Mammary epithelial cell (primary cell): ENCODE measurements at regions of chr2 and their contacts with region 1.

Region 1: DNA sequence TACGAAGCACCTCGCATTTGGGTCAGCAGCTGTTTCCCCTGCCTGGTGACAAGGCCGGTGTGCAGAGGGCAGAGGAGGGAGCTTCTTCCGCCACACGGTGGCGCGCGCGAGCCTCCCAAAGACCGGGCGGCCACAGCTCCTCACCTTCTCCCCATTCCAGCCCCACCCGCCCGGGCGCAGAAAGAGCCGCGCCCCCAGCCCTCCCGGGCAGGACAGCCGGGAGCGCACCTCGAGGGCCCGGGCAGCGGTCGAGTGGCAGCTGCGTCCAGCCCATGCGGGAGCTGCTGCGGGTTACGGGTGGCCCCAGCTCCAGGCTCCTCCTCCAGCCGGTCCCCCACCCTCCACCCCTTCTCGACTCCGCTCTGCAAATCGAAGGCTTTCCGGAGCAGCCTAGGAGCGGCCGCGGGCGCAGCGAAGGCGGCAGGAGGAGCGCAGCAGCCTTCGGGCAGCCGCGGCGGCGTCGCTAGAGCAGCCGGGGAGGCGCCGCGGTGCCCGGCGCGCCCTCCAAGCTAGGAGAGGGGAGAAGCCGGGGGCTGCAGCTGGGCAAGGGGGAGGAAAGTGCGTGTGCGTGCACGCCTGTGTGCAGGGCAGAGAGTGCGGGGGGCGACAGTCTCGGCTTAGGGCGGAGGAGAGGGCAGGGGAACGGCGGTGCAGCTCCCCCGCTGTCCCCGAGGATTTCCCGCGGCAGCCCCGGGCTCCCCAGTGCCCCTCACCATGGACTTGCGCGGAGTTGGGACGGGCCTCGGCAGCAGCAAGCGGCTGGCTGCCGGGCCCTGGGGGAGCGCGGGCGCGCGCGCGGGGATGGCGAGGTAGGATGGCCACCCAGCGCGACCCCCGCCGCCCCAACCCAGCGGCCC is at the start of gene CCDC85A:
- DNase-seq: peak; percentile 73
- H3K4me3 ChIP-seq: peak within 1 kb of the TSS; percentile 42 to 59 (median 56)
- H3K27ac ChIP-seq: no peak within 1 kb of the TSS
- H3K4me1 ChIP-seq: peaks cover 15% of the 10 kb centered on the region
- H3K27me3 ChIP-seq: no peaks in the 10 kb centered on the region
- CTCF ChIP-seq: peak; percentile 65 to 87
- total RNA-seq, gene CCDC85A: 0.17 TPM in 1 of 2 donors, not detected in the other

Region 2: DNA sequence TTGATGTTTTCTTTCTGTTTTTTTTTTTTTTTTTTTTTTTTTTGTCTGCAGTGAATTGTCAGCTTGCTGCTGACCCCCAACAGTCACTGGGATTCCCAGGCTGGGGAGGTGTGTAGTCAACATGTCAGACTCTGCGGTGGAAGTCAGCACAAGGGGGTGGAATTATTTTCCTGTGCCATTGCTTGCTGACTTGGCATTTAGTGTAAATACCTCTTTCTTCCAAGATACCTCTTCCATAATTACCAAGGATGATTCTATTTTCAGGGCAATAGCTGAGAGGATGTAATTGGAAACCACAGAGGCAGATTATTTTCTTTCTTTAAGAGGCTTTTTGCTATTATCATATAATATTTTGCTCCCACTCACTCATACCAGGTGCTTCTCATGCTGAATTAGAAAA is 266.2 kb after region 1 on chr2:
- CTCF ChIA-PET with region 1: no interaction called
- dilution Hi-C with region 1: no loop called
- in situ Hi-C with region 1: no loop called
- intact Hi-C with region 1: loop called (anchors 10 kb)
- DNase-seq: no peak
- H3K4me3 ChIP-seq: no peak overlapping the region
- H3K27ac ChIP-seq: no peak overlapping the region
- H3K4me1 ChIP-seq: no peaks in the 10 kb centered on the region
- H3K27me3 ChIP-seq: no peaks in the 10 kb centered on the region
- CTCF ChIP-seq: no peak

Region 3: GRCh38 chr2:56580242-56580641 is 396.4 kb after region 1 on chr2:
- CTCF ChIA-PET with region 1: no interaction called
- dilution Hi-C with region 1: no loop called
- in situ Hi-C with region 1: no loop called
- intact Hi-C with region 1: loop called (anchors 10 kb)
- DNase-seq: peak; percentile 48
- H3K4me3 ChIP-seq: no peak overlapping the region
- H3K27ac ChIP-seq: no peak overlapping the region
- H3K4me1 ChIP-seq: no peaks in the 10 kb centered on the region
- H3K27me3 ChIP-seq: no peaks in the 10 kb centered on the region
- CTCF ChIP-seq: no peak

Region 4: DNA sequence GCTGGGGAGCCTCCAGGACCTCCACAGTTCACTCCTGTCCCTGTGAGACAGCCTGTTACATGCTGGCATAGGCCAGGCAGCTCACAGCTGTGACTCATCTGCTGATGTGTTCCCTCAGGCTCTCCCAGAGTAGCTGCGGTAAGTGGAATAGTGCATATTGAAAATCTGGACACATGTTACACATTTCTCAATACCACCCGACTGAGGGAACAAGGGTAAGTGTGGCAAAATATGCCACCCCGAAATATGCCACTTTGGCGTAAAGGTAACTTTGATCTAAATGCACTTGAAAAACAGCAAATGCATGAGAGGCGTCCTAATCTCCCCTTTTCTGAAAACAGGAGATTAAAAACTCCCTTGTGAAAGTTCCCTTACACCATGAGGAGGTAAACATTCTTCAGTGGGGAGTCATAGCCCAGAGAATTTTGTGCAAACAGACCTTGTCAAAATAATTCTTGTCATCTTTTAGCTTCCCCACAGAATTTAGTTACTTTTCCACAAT is 557.8 kb after region 1 on chr2:
- CTCF ChIA-PET with region 1: no interaction called
- dilution Hi-C with region 1: no loop called
- in situ Hi-C with region 1: no loop called
- intact Hi-C with region 1: loop called (anchors 2 kb)
- DNase-seq: peak; percentile 92
- H3K4me3 ChIP-seq: peak overlapping the region in 1 of 3 experiments; percentile 43
- H3K27ac ChIP-seq: peak overlapping the region; percentile 13
- H3K4me1 ChIP-seq: peaks cover 20% of the 10 kb centered on the region
- H3K27me3 ChIP-seq: no peaks in the 10 kb centered on the region
- CTCF ChIP-seq: no peak

Region 5: DNA sequence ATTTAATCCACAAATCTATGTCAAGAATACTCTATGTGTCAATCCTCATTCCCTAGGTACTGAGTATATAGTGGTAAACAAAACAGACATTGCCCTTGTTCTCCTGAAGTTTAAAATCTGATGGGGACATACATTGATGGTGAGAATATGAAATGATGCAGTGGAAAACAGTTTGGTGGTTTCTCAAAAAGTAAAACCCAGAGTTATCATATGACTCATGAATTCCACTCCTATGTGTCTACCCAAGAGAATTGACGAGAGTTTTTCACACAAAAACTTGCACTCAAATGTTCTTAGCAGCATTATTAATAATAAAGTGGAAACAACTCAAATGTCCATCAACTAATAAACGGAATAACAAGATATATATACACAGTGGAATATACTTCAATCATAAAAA is 586.6 kb after region 1 on chr2:
- CTCF ChIA-PET with region 1: no interaction called
- dilution Hi-C with region 1: no loop called
- in situ Hi-C with region 1: loop called in 1 of 2 experiments (anchors 25 kb)
- intact Hi-C with region 1: no loop called
- DNase-seq: peak; percentile 3
- H3K4me3 ChIP-seq: no peak overlapping the region
- H3K27ac ChIP-seq: no peak overlapping the region
- H3K4me1 ChIP-seq: no peaks in the 10 kb centered on the region
- H3K27me3 ChIP-seq: no peaks in the 10 kb centered on the region
- CTCF ChIP-seq: no peak

Region 6: GRCh38 chr2:57022496-57022895 is 838.6 kb after region 1 on chr2:
- CTCF ChIA-PET with region 1: no interaction called
- dilution Hi-C with region 1: no loop called
- in situ Hi-C with region 1: no loop called
- intact Hi-C with region 1: loop called (anchors 5 kb)
- DNase-seq: no peak
- H3K4me3 ChIP-seq: no peak overlapping the region
- H3K27ac ChIP-seq: no peak overlapping the region
- H3K4me1 ChIP-seq: no peaks in the 10 kb centered on the region
- H3K27me3 ChIP-seq: no peaks in the 10 kb centered on the region
- CTCF ChIP-seq: no peak

Region 7: GRCh38 chr2:57516698-57517340 is 1332.9 kb after region 1 on chr2:
- CTCF ChIA-PET with region 1: no interaction called
- dilution Hi-C with region 1: no loop called
- in situ Hi-C with region 1: loop called (anchors 25 kb)
- intact Hi-C with region 1: loop called (anchors 2 kb)
- DNase-seq: peak; percentile 24
- H3K4me3 ChIP-seq: no peak overlapping the region
- H3K27ac ChIP-seq: no peak overlapping the region
- H3K4me1 ChIP-seq: no peaks in the 10 kb centered on the region
- H3K27me3 ChIP-seq: no peaks in the 10 kb centered on the region
- CTCF ChIP-seq: peak; percentile 33 to 48